Ascending aorta (tissue), 2 donors: ENCODE measurements at regions of chr7 and their contacts with region 1.

Region 1: GRCh38 chr7:101936611-101937231 is 119.3 kb downstream of the CUX1 start:
- DNase-seq: peak; percentile 32 to 82
- H3K4me3 ChIP-seq: peak overlapping the region; percentile 47 to 52
- H3K27ac ChIP-seq: peak overlapping the region; percentile 89 to 92
- H3K4me1 ChIP-seq: peaks cover 6 to 38% of the 10 kb centered on the region in 2 donors
- H3K27me3 ChIP-seq: no peaks in the 10 kb centered on the region
- CTCF ChIP-seq: no peak

Region 2: GRCh38 chr7:101614939-101615302 is 321.8 kb before region 1 on chr7:
- intact Hi-C with region 1: loop called (anchors 10 kb)
- DNase-seq: peak; percentile 51 to 87
- H3K4me3 ChIP-seq: no peak overlapping the region
- H3K27ac ChIP-seq: peak overlapping the region; percentile 75 to 96
- H3K4me1 ChIP-seq: peaks cover 11 to 21% of the 10 kb centered on the region in 2 donors
- H3K27me3 ChIP-seq: no peaks in the 10 kb centered on the region
- CTCF ChIP-seq: no peak

Region 3: DNA sequence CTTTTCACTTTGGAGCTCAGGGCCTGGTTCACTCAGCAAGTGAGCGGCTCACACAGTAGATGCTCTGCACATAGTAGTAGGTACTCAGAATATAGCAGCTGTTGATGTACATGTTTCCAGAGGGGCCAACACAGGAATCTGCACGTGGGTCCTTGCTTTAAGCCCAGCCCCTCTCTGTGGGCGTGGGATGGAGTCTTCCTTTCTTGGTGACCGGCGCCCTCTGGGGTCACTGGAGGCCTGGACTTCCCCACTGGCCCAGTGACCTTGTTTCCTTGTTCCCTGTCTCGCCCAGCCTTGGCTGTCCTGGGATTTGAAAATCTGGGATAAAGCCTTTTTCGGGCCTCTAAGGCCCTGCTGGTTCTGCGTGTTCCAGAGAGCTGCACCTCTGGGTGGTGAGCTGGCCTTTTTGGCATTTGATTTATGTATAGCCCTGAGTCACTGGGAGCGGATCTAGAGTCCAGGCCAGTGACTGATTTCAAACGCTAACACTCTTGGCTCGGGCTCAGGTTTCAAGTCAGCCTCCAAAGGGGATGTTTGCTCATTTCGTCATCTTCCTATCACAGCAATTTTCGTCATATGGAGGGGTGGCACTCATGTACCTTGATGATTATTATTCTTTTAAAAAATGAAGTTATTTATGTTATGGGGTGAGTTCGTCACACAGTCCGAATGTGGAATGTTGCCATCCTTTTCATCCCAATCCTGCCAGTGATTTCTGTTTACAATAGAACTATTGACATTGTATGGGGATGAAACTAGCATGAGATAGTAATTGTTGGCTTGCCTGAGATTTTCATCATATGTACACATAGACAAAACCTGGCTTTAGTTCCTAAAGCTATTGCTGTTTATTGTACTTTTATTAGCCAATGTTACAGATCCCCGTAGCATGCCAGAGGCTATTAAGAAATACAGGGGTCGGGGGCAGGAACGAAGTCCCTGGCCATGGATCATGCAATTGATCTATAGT is 53.8 kb before region 1 on chr7:
- intact Hi-C with region 1: loop called (anchors 5 kb)
- DNase-seq: peak; percentile 87 to 98
- H3K4me3 ChIP-seq: peak overlapping the region in 1 of 2 donors; percentile 17
- H3K27ac ChIP-seq: peak overlapping the region; percentile 86 to 89
- H3K4me1 ChIP-seq: peaks cover 17 to 50% of the 10 kb centered on the region in 2 donors
- H3K27me3 ChIP-seq: no peaks in the 10 kb centered on the region
- CTCF ChIP-seq: no peak

Region 4: GRCh38 chr7:101898106-101898505 is 38.6 kb before region 1 on chr7:
- intact Hi-C with region 1: loop called (anchors 5 kb)
- DNase-seq: no peak
- H3K4me3 ChIP-seq: peak overlapping the region in 1 of 2 donors; percentile 33
- H3K27ac ChIP-seq: peak overlapping the region; percentile 72 to 75
- H3K4me1 ChIP-seq: peaks cover 13 to 53% of the 10 kb centered on the region in 2 donors
- H3K27me3 ChIP-seq: no peaks in the 10 kb centered on the region
- CTCF ChIP-seq: no peak

Region 5: DNA sequence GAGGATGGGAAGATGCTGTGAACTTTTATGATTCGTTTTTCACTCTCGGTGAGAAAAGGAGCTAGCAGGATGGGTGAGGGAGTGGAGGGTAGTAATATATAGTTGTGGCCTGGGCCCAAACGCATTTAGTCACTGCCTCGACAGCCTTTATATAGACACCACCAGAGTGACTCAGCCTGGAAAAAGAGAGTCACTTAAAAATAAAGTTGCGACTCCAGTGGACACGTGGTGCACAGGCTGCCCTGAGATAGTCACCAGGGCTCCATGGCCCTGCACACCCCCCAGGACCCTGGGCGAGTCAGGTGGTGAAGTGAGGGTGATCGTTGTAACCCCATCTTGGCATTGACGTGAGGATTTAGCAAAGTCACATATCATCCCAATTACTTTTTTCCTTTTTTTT is 12.6 kb before region 1 on chr7:
- intact Hi-C with region 1: loop called (anchors 1 kb)
- DNase-seq: peak; percentile 65 to 93
- H3K4me3 ChIP-seq: peak overlapping the region in 1 of 2 donors; percentile 56
- H3K27ac ChIP-seq: peak overlapping the region; percentile 89 to 95
- H3K4me1 ChIP-seq: peaks cover 7 to 25% of the 10 kb centered on the region in 2 donors
- H3K27me3 ChIP-seq: no peaks in the 10 kb centered on the region
- CTCF ChIP-seq: no peak

Region 6: GRCh38 chr7:101953248-101953819 is 16.6 kb after region 1 on chr7:
- intact Hi-C with region 1: loop called (anchors 2 kb)
- DNase-seq: peak in 1 of 2 donors; percentile 83
- H3K4me3 ChIP-seq: no peak overlapping the region
- H3K27ac ChIP-seq: peak overlapping the region; percentile 58 to 82
- H3K4me1 ChIP-seq: peaks cover 4 to 31% of the 10 kb centered on the region in 2 donors
- H3K27me3 ChIP-seq: no peaks in the 10 kb centered on the region
- CTCF ChIP-seq: no peak

Region 7: DNA sequence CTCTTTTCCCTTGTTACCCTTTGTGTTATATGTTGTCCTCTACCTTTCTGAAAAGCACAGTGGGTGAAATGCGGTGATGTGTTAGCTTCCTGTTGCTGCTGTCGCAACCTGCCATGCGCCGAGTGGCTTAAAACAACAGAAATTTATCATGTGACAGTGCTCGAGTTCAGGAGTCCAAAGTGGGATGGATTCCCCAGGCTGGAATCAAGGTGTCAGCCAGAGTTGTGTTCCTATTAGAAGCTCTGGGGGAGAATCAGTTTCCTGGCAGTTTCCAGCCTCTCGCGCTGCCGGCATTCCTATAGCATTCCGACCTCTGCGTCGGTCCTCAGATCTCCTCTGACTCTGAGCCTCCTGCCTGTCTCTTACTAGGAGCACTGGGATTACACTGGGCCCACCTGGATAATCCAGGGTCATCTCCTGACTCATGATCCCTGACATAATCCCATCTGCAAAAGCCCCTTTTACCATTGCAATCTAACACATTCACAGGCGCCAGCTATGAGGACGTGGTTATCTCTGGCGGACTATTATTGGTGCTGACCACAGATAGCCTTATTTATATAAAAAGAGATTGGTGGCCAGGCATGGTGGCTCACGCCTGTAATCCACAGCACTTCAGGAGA is 88.2 kb after region 1 on chr7:
- intact Hi-C with region 1: no loop called
- DNase-seq: no peak
- H3K4me3 ChIP-seq: no peak overlapping the region
- H3K27ac ChIP-seq: no peak overlapping the region
- H3K4me1 ChIP-seq: no peaks in the 10 kb centered on the region
- H3K27me3 ChIP-seq: no peaks in the 10 kb centered on the region
- CTCF ChIP-seq: no peak